MCF 10A (cell line): ENCODE measurements at regions of chr9 and their contacts with region 1.

Region 1: GRCh38 chr9:95048225-95049087 is 269.1 kb downstream of the FANCC start:
- DNase-seq: peak; percentile 85
- H3K4me3 Mint-ChIP-seq: peak overlapping the region; percentile 78
- H3K27ac Mint-ChIP-seq: peak overlapping the region; percentile 76
- H3K4me1 Mint-ChIP-seq: peaks cover 16% of the 10 kb centered on the region
- H3K27me3 Mint-ChIP-seq: no peaks in the 10 kb centered on the region
- CTCF ChIP-seq: no peak

Region 2: DNA sequence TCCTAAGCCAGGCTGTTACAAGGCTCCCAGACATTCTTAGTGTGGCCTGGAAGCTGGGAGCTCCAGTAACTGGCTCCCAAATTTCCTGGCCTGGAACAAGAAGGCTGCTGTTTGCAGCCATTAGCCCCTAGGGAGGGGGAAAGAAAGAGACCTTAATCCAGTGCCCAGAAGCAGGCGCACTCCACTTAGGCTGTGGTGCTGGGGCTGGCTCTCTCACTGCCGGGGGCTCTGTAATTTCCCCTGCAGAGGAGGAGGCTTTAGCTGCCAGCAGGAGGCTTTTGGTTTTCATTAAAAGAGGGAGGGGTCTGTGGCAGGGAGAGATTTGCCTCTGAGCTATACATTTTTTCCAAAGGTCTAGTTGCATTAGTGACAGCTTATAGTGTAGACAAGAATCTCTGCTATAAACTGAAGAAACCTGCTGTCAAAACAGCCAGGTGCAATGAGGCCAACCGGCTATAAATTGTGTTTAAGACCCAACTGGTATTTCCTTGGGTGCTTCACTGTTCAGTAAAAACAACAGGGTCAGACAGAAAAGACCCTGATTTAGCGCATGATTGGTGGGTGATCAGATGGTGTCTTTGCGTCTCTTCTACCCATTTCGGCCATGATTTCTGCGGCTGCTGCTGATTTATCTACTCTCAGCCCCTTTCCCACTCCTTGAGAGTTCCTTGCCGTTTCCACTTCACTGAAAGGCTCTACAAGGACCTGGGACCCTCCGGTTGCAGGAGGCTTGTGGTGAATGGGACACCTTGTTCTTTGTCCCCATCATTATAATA is 67.3 kb before region 1 on chr9:
- CTCF ChIA-PET with region 1: no interaction called
- POLR2A ChIA-PET with region 1: no interaction called
- intact Hi-C with region 1: no loop called
- DNase-seq: no peak
- H3K4me3 Mint-ChIP-seq: no peak overlapping the region
- H3K27ac Mint-ChIP-seq: no peak overlapping the region
- H3K4me1 Mint-ChIP-seq: no peaks in the 10 kb centered on the region
- H3K27me3 Mint-ChIP-seq: no peaks in the 10 kb centered on the region
- CTCF ChIP-seq: no peak

Region 3: DNA sequence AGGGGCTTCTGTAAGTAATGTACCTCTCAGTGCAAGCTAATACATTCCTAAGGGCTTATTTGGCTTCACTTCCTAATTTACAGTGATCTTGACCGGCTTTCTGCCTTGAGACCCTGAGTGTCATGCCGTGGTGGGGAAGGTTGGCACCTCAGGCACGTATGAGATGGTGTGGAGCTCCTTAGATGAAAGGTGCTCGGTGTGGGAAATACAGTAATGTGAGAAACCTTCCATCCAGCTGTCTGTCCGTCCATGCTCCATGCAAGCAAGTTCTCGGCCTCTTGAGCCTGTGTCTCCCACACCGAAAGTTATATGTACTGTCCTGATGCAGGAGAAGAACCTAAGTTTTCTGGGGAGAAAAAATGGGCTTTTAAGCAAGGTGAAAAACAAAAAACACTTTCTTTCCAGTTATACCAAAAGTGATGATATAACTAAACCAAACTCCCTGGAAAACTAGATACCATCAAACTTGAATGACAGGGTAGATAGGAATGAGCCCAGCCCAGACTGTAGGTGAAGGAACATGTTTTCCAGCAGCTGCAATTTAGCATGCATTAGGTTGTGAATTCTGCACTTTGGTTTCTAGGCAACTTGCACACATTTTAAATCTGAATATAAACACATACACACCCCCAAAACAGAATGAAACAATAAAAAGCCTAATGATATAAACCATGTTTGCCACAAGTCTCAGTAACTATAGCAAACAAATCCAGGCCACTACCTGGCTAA is 10.5 kb before region 1 on chr9:
- CTCF ChIA-PET with region 1: interaction called, 6 read pairs
- POLR2A ChIA-PET with region 1: interaction called, 29 read pairs
- intact Hi-C with region 1: no loop called
- DNase-seq: no peak
- H3K4me3 Mint-ChIP-seq: no peak overlapping the region
- H3K27ac Mint-ChIP-seq: no peak overlapping the region
- H3K4me1 Mint-ChIP-seq: peaks cover 21% of the 10 kb centered on the region
- H3K27me3 Mint-ChIP-seq: no peaks in the 10 kb centered on the region
- CTCF ChIP-seq: no peak

Region 4: DNA sequence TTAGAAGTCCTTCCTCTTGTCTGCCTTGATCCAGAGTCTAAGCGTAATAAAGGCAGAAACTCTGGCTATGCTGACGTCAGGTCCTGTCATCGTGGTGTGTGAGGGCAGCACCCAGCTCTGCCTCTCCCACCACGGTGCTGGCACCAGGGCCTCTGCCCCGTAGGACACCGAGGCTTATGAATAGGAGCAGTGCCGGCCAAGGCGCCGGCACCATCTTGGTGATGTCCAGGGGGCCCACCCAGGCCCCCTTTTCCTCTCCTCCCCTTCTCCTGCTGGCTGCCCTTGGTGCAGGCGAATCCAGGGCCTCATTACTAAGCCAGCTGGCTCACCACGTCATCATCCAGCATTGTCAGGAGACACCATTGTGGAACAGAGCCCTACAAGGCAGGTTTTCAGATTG is 16.8 kb after region 1 on chr9:
- CTCF ChIA-PET with region 1: no interaction called
- POLR2A ChIA-PET with region 1: interaction called, 11 read pairs
- intact Hi-C with region 1: no loop called
- DNase-seq: no peak
- H3K4me3 Mint-ChIP-seq: no peak overlapping the region
- H3K27ac Mint-ChIP-seq: no peak overlapping the region
- H3K4me1 Mint-ChIP-seq: peaks cover 10% of the 10 kb centered on the region
- H3K27me3 Mint-ChIP-seq: no peaks in the 10 kb centered on the region
- CTCF ChIP-seq: no peak

Region 5: DNA sequence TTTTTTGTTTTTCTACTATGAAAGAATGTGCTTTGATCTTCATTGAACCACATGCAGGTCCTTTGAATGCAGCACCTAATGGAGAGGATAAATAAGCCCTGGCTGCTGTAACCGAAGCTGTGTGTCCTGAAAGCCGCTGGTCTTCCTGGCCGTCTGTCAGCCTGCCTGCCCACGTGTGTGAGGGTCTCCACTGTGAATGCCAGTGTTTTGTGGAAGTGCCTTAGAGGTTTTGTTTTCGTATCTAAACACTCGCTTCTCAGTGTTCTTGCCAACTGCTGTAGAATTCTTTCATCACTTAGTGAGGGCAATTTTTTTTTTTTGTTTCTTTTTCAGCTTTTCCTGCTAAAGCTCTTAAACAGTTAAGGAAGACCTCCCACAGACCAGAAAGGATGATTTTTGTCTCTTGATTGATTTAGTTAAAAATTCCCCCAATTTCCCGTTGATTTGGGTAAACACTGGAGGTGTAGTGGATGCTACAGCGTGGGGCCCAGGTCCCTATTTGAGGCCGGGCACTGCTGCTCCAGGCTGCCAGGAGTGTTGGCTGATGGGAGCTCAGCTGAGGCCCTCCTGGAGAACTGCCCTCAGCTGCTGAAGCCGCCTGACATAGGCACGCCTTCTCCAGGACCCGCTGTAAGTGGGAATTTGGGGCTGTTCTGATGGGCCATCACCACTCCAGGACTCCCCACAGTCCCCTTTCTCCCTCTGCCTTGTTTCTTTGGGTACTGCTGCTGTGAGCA is 497.5 kb after region 1 on chr9:
- CTCF ChIA-PET with region 1: no interaction called
- POLR2A ChIA-PET with region 1: no interaction called
- intact Hi-C with region 1: no loop called
- DNase-seq: no peak
- H3K4me3 Mint-ChIP-seq: no peak overlapping the region
- H3K27ac Mint-ChIP-seq: no peak overlapping the region
- H3K4me1 Mint-ChIP-seq: no peaks in the 10 kb centered on the region
- H3K27me3 Mint-ChIP-seq: peaks cover 27% of the 10 kb centered on the region
- CTCF ChIP-seq: no peak